Heart left ventricle (tissue), 16 donors: ENCODE measurements at regions of chr9 and their contacts with region 1.

Region 1: GRCh38 chr9:2620919-2621679 is 488 bp upstream of the VLDLR start:
- DNase-seq: peak; percentile 76 to 90 (median 89)
- ATAC-seq: peak; percentile 74 to 82 (median 82)
- H3K4me3 ChIP-seq: peak overlapping the region; percentile 70 to 94 (median 86)
- H3K27ac ChIP-seq: peak overlapping the region; percentile 55 to 98 (median 94)
- H3K4me1 ChIP-seq: peaks cover 0 to 38% (median 23%) of the 10 kb centered on the region in 12 donors
- H3K27me3 ChIP-seq: peaks cover 0 to 44% (median 0%) of the 10 kb centered on the region in 9 donors
- CTCF ChIP-seq: peak in 6 of 12 donors; percentile 12 to 40 (median 21)
- POLR2A ChIP-seq: peak in 1 of 2 donors; percentile 64

Region 2: GRCh38 chr9:2158111-2158610 is 462.9 kb before region 1 on chr9:
- intact Hi-C with region 1: loop called in 2 of 10 experiments (anchors 10 kb)
- DNase-seq: peak in 3 of 5 donors; percentile 20 to 53 (median 36)
- ATAC-seq: peak; percentile 24 to 61 (median 48)
- H3K4me3 ChIP-seq: peak overlapping the region; percentile 1 to 71 (median 56)
- H3K27ac ChIP-seq: peak overlapping the region; percentile 51 to 79 (median 72)
- H3K4me1 ChIP-seq: peaks cover 0 to 65% (median 23%) of the 10 kb centered on the region in 12 donors
- H3K27me3 ChIP-seq: no peaks in the 10 kb centered on the region
- CTCF ChIP-seq: peak in 3 of 12 donors; percentile 8 to 22 (median 14)
- POLR2A ChIP-seq: no peak

Region 3: GRCh38 chr9:2494562-2494961 is 126.5 kb before region 1 on chr9:
- intact Hi-C with region 1: loop called in 7 of 10 experiments (anchors 5 to 10 kb)
- DNase-seq: no peak
- ATAC-seq: peak in 2 of 4 donors; percentile 40 to 50
- H3K4me3 ChIP-seq: no peak overlapping the region
- H3K27ac ChIP-seq: peak overlapping the region in 9 of 12 donors; percentile 14 to 78 (median 67)
- H3K4me1 ChIP-seq: peaks cover 3 to 64% (median 23%) of the 10 kb centered on the region in 12 donors
- H3K27me3 ChIP-seq: no peaks in the 10 kb centered on the region
- CTCF ChIP-seq: no peak
- POLR2A ChIP-seq: no peak

Region 4: DNA sequence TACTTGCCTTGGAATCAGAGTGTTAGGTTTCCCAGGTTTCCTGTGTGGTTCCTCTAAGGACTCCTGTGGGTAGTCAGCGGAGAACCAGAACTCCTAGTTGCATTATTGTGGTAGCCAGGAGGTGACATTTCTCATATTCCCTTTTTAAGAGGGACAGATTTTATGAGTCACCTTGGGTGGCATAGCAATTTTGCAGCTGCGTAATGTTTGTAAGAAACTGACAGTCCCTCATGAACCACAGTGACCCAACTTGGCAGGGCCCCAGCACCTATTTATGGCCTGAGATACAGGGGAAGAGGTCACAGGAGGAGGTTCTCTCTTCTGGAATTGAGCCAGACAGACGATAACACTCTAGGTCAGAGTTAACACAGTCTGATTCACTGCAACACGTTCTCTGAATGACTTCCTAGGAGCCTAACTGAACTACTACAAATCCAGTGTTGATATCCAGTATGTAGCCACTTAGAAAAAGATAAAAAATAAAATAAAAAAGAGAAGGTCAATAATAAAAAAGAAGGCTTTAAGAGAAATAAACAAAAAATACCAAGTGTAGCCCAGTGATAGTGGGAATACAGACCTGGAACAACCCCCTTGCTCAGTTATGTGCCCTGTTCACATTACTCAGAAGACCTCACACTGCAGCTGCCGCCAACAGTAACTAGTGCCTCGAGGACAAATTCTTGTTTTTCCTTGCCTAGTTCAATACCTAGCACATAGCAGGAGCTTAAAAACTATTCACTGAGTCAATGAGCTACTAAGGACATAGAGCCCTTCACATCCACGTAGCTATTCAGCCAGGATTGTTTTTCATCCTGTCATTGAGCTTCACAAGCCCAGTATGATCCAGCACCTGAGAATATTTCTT is 50.3 kb before region 1 on chr9:
- intact Hi-C with region 1: loop called in 6 of 10 experiments (anchors 2 to 5 kb)
- DNase-seq: peak; percentile 91 to 97 (median 93)
- ATAC-seq: peak; percentile 92 to 97 (median 94)
- H3K4me3 ChIP-seq: peak overlapping the region in 3 of 12 donors; percentile 9 to 25 (median 10)
- H3K27ac ChIP-seq: peak overlapping the region; percentile 49 to 89 (median 80)
- H3K4me1 ChIP-seq: peaks cover 5 to 67% (median 28%) of the 10 kb centered on the region in 12 donors
- H3K27me3 ChIP-seq: no peaks in the 10 kb centered on the region
- CTCF ChIP-seq: peak in 5 of 12 donors; percentile 7 to 31 (median 13)
- POLR2A ChIP-seq: no peak

Region 5: DNA sequence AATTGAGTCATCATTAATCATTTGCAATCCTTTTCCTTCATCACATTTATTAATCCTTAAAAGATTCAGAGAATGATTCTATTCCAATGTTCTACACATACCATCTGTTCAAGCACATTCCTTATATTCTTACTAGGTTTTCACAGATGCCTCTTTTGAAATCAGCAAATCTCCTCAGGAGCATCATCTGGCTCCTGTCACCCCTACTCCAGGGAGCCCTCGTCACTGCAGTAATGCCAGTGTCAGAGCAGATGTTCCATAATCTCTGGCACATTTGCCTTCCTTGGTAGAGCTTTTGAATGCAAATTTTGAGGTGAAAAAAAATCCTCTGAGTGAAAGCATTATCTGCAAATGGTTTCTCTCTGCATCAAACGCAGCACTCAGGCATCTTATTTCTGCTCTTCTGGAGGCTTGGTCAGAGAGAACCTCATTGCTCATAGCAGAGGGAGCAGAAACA is 88.6 kb after region 1 on chr9:
- intact Hi-C with region 1: no loop called
- DNase-seq: no peak
- ATAC-seq: no peak
- H3K4me3 ChIP-seq: no peak overlapping the region
- H3K27ac ChIP-seq: no peak overlapping the region
- H3K4me1 ChIP-seq: peaks cover 0 to 3% (median 0%) of the 10 kb centered on the region in 12 donors
- H3K27me3 ChIP-seq: no peaks in the 10 kb centered on the region
- CTCF ChIP-seq: no peak
- POLR2A ChIP-seq: no peak

Region 6: DNA sequence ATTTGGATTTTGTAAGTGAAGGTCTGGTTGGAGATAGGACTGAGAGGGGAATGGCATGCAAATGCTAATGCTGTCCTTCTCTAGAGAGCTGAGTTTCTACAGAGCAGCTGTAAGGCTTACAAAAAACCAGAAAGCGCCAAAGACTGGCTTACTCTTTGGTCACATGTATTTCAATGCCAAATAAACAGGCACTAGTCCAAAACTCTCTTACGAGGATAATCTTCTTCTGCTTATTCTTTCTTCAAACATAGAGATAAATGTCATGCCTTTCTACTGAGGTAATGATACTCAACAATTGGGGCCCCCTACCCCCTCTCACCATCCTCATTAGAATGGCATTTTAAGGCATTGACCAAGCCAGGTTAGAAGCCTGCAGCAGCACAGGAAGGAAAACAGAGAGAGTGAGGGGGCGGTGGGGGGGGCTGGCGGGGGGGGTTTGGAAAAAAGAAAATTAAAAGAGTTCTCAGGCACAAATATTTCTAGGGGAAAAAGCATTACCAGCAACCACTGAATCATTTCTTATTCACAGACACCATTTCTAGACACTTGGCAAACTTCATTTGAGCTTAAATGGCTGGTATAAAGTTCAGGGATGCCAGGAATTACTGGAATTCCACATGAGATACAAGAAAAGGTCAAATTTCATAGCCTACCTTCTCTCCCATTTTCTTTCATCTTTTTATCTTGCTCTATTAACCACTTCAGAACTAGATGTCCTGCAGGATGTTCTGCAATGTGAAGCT is 188.8 kb after region 1 on chr9:
- intact Hi-C with region 1: loop called in 3 of 10 experiments (anchors 10 kb)
- DNase-seq: peak in 1 of 5 donors; percentile 29
- ATAC-seq: peak; percentile 47 to 88 (median 84)
- H3K4me3 ChIP-seq: peak overlapping the region in 1 of 12 donors; percentile 14
- H3K27ac ChIP-seq: peak overlapping the region; percentile 40 to 82 (median 58)
- H3K4me1 ChIP-seq: peaks cover 0 to 30% (median 16%) of the 10 kb centered on the region in 12 donors
- H3K27me3 ChIP-seq: no peaks in the 10 kb centered on the region
- CTCF ChIP-seq: no peak
- POLR2A ChIP-seq: no peak

Region 7: GRCh38 chr9:2955575-2955974 is 334.5 kb after region 1 on chr9:
- intact Hi-C with region 1: no loop called
- DNase-seq: no peak
- ATAC-seq: no peak
- H3K4me3 ChIP-seq: no peak overlapping the region
- H3K27ac ChIP-seq: no peak overlapping the region
- H3K4me1 ChIP-seq: no peaks in the 10 kb centered on the region
- H3K27me3 ChIP-seq: peaks cover 0 to 10% (median 0%) of the 10 kb centered on the region in 9 donors
- CTCF ChIP-seq: no peak
- POLR2A ChIP-seq: no peak